Activated CD4-positive, alpha-beta T cell treated with anti-CD3 and anti-CD28 coated beads for 36 hours (primary cell): ENCODE measurements at regions of chr3 and their contacts with region 1.

Region 1: GRCh38 chr3:86814918-86815655 is 175.9 kb downstream of the VGLL3 start:
- DNase-seq: no peak
- ATAC-seq: no peak
- H3K4me3 Mint-ChIP-seq: no peak overlapping the region
- H3K27ac Mint-ChIP-seq: no peak overlapping the region
- H3K4me1 Mint-ChIP-seq: no peaks in the 10 kb centered on the region
- H3K27me3 Mint-ChIP-seq: no peaks in the 10 kb centered on the region

Region 2: DNA sequence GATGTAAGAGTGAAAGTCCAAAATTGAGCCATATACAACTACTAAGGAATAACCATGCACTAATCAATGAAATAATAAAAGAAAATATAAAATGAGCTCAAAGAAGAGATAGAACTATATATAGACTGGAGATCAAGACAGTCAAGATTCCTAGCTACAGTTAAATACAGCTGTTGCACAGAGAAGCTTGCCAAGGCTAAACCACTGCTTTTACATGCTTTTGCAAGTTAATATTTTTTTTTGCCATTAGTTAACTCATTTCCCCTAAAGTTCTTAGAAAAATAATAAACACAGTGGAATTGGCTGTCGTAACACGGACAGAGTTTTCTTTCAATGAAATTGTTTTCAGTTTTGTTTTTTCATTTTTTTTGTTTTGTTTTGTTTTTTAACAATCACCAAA is 52.9 kb after region 1 on chr3:
- CTCF ChIA-PET with region 1: no interaction called
- POLR2A ChIA-PET with region 1: interaction called, 12 read pairs
- intact Hi-C with region 1: no loop called
- DNase-seq: no peak
- ATAC-seq: no peak
- H3K4me3 Mint-ChIP-seq: no peak overlapping the region
- H3K27ac Mint-ChIP-seq: no peak overlapping the region
- H3K4me1 Mint-ChIP-seq: no peaks in the 10 kb centered on the region
- H3K27me3 Mint-ChIP-seq: no peaks in the 10 kb centered on the region

Region 3: DNA sequence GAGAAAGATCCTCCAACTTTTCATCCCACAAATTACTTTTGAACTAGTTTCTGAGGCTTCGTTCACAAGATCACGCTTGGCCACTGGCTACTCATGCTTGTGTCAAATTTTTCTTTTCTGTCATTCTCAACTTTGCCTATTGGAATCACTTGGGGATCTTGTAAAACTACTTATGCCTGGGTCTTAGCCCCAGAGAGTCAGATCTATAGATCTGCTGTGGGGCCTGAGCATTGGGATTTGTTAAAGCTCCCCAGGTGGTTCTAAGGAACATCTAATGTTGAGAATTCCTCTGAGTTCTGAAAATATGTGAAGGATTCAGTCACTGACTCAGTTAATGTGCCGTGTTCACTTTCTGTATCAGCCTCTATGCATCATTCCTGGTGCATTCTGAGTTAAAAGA is 247.6 kb after region 1 on chr3:
- CTCF ChIA-PET with region 1: no interaction called
- POLR2A ChIA-PET with region 1: no interaction called
- intact Hi-C with region 1: no loop called
- DNase-seq: no peak
- ATAC-seq: no peak
- H3K4me3 Mint-ChIP-seq: no peak overlapping the region
- H3K27ac Mint-ChIP-seq: no peak overlapping the region
- H3K4me1 Mint-ChIP-seq: no peaks in the 10 kb centered on the region
- H3K27me3 Mint-ChIP-seq: peaks cover 2% of the 10 kb centered on the region